Psoas muscle (tissue), 8 donors: ENCODE measurements at regions of chr6 and their contacts with region 1.

Region 1: DNA sequence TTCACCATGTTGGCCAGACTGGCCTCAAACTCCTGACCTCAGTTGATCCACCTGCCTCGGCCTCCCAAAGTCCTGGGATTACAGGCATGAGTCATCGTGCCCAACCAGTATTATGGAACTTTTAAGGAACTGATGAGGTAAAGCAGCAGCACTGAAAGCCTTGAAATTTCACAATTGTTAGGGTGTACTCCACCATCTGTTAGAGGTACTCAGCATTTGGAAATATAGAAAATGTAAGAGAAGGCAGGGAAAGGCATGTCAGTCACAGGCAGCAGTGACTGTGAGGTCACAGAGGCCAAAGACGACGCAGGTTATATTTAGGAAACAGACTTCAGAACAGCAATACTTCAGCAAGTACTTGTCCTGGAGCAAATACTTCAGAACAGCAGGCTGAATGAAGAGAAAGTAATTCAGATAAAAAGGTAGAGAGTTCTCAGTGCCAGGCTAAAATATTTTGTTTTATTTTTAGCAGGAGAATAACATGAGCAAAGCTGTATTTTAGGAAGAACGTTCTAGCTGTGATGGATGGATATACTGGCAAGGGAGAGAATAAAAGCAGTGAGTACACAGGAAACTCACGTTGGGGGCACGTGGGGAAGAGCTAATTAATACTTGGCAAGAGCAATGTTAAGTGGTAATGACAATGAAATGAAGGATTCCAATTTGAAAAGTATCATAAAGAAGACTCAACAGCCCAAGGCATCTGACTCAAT is 67.2 kb downstream of the DTNBP1 start:
- DNase-seq: no peak
- ATAC-seq: peak; percentile 59 to 88 (median 84)
- H3K4me3 ChIP-seq: no peak overlapping the region
- H3K27ac ChIP-seq: peak overlapping the region; percentile 70
- H3K4me1 ChIP-seq: peaks cover 34% of the 10 kb centered on the region
- H3K27me3 ChIP-seq: no peaks in the 10 kb centered on the region
- CTCF ChIP-seq: no peak

Region 2: DNA sequence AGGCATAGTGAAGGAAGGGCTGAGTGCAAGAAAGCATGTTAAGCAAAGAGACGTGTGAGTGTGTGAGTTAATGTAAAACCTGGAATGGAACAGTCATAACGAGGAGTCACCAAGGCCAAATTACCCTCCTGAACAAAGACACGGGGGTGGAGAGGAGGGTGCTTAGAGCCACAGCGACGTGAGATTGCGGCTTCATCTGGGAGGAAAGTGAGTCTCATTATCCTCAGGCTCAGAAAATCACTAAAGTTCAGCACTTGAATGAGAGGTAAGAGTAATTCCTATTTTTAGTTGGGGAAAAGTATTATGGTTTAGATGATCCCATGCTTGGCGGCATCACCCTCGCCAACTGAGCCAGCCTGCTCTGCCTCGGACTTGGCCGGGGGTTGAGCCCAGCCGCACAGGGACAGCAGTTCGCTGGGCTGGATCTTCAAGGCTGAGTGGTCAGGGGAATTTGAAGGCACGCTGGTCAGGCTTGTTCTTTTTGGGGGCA is 69.4 kb before region 1 on chr6:
- intact Hi-C with region 1: loop called in 1 of 2 experiments (anchors 5 kb)
- DNase-seq: peak in 1 of 2 donors; percentile 83
- ATAC-seq: peak; percentile 76 to 87 (median 84)
- H3K4me3 ChIP-seq: no peak overlapping the region
- H3K27ac ChIP-seq: peak overlapping the region; percentile 73
- H3K4me1 ChIP-seq: peaks cover 22% of the 10 kb centered on the region
- H3K27me3 ChIP-seq: no peaks in the 10 kb centered on the region
- CTCF ChIP-seq: no peak

Region 3: GRCh38 chr6:15551798-15552197 is 43.8 kb before region 1 on chr6:
- intact Hi-C with region 1: no loop called
- DNase-seq: no peak
- ATAC-seq: peak in 2 of 4 donors; percentile 31 to 43
- H3K4me3 ChIP-seq: no peak overlapping the region
- H3K27ac ChIP-seq: no peak overlapping the region
- H3K4me1 ChIP-seq: peaks cover 15% of the 10 kb centered on the region
- H3K27me3 ChIP-seq: no peaks in the 10 kb centered on the region
- CTCF ChIP-seq: no peak